Heart left ventricle (tissue), 16 donors: ENCODE measurements at regions of chr2 and their contacts with region 1.

Region 1: DNA sequence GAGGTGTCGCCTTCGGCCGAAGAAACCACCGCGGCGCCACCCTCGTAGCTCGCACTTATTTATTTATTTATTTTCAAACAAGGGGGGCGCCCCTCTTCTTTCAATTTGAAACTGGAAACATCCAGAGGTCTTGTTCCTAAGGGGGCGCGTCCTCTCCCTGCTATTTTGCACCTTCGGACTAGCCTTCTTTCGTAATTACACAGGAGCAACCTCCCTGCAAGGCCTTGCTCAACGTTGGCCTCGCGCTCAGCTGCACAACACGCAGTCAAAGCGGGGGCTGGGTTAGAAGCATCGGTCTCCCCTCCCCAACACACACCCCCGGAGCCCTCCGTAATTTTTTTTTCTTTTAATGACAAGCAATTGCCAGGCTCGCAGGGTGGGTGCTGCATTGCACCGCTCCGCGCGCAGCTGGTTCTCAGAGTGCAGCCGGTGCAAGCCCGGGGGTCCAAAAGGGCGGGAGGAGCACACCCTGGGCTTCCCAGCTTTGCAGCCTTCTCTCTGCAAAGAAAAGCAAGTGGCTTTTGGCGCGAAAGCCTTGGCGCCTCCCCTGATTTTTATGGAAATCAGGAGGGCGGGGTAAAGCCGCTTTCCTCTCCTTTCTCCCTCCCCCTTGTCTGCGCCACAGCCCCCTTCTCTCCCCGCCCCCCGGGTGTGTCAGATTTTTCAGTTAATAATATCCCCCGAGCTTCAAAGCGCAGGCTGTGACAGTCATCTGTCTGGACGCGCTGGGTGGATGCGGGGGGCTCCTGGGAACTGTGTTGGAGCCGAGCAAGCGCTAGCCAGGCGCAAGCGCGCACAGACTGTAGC is at the start of gene MYCN:
- DNase-seq: peak in 3 of 5 donors; percentile 52 to 65 (median 55)
- ATAC-seq: peak; percentile 15 to 63 (median 32)
- H3K4me3 ChIP-seq: peak within 1 kb of the TSS; percentile 22 to 73 (median 58)
- H3K27ac ChIP-seq: peak within 1 kb of the TSS in 5 of 12 donors; percentile 5 to 39 (median 29)
- H3K4me1 ChIP-seq: peaks cover 0 to 50% (median 39%) of the 10 kb centered on the region in 12 donors
- H3K27me3 ChIP-seq: peaks cover 0 to 57% (median 23%) of the 10 kb centered on the region in 9 donors
- CTCF ChIP-seq: peak in 7 of 12 donors; percentile 5 to 90 (median 80)
- POLR2A ChIP-seq: no peak
- total RNA-seq, gene MYCN: 0.37 to 1.6 (median 1.0) TPM in 7 of 9 donors, not detected in the others

Region 2: GRCh38 chr2:15645720-15646385 is 294.2 kb before region 1 on chr2:
- intact Hi-C with region 1: loop called in 2 of 10 experiments (anchors 2 to 5 kb)
- DNase-seq: no peak
- ATAC-seq: peak in 2 of 4 donors; percentile 22 to 29
- H3K4me3 ChIP-seq: no peak overlapping the region
- H3K27ac ChIP-seq: no peak overlapping the region
- H3K4me1 ChIP-seq: peaks cover 0 to 3% (median 0%) of the 10 kb centered on the region in 12 donors
- H3K27me3 ChIP-seq: no peaks in the 10 kb centered on the region
- CTCF ChIP-seq: no peak
- POLR2A ChIP-seq: no peak

Region 3: GRCh38 chr2:15748736-15749323 is 191.2 kb before region 1 on chr2:
- intact Hi-C with region 1: no loop called
- DNase-seq: no peak
- ATAC-seq: no peak
- H3K4me3 ChIP-seq: no peak overlapping the region
- H3K27ac ChIP-seq: peak overlapping the region in 1 of 12 donors; percentile 40
- H3K4me1 ChIP-seq: peaks cover 0 to 41% (median 20%) of the 10 kb centered on the region in 12 donors
- H3K27me3 ChIP-seq: no peaks in the 10 kb centered on the region
- CTCF ChIP-seq: peak in 10 of 12 donors; percentile 17 to 39 (median 26)
- POLR2A ChIP-seq: no peak

Region 4: GRCh38 chr2:15984368-15985255 is 44.6 kb after region 1 on chr2:
- intact Hi-C with region 1: no loop called
- DNase-seq: peak in 1 of 5 donors; percentile 32
- ATAC-seq: peak; percentile 46 to 71 (median 56)
- H3K4me3 ChIP-seq: no peak overlapping the region
- H3K27ac ChIP-seq: no peak overlapping the region
- H3K4me1 ChIP-seq: no peaks in the 10 kb centered on the region
- H3K27me3 ChIP-seq: peaks cover 0 to 7% (median 0%) of the 10 kb centered on the region in 9 donors
- CTCF ChIP-seq: no peak
- POLR2A ChIP-seq: no peak

Region 5: DNA sequence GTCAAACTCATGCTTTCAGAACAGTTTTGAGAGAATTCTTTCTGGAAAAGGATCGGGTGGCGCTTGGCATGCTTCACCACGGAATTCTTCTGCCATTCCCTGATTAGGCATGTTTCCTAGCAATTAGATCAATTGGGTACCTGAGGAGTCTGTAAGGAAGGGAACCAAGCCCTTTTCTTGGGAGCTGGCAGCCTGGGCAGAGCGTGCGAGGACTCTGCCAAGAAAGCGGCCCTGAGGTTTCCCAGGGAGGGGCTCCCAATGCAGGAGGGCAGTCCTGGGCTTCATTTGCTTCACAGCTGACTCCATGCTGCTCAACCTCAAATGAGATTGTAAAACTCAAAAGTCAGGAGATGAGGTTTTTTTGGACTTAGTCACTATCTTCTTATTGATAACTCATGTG is 60.6 kb after region 1 on chr2:
- intact Hi-C with region 1: no loop called
- DNase-seq: no peak
- ATAC-seq: no peak
- H3K4me3 ChIP-seq: no peak overlapping the region
- H3K27ac ChIP-seq: no peak overlapping the region
- H3K4me1 ChIP-seq: no peaks in the 10 kb centered on the region
- H3K27me3 ChIP-seq: peaks cover 0 to 9% (median 0%) of the 10 kb centered on the region in 9 donors
- CTCF ChIP-seq: no peak
- POLR2A ChIP-seq: no peak

Region 6: GRCh38 chr2:16218625-16219024 is 278.6 kb after region 1 on chr2:
- intact Hi-C with region 1: loop called in 7 of 10 experiments (anchors 5 to 10 kb)
- DNase-seq: no peak
- ATAC-seq: no peak
- H3K4me3 ChIP-seq: no peak overlapping the region
- H3K27ac ChIP-seq: no peak overlapping the region
- H3K4me1 ChIP-seq: peaks cover 0 to 8% (median 0%) of the 10 kb centered on the region in 12 donors
- H3K27me3 ChIP-seq: no peaks in the 10 kb centered on the region
- CTCF ChIP-seq: peak in 9 of 12 donors; percentile 10 to 48 (median 29)
- POLR2A ChIP-seq: no peak

Region 7: GRCh38 chr2:16281451-16282336 is 341.6 kb after region 1 on chr2:
- intact Hi-C with region 1: loop called in 9 of 10 experiments (anchors 1 to 5 kb)
- DNase-seq: peak in 1 of 5 donors; percentile 15
- ATAC-seq: peak; percentile 42 to 77 (median 69)
- H3K4me3 ChIP-seq: no peak overlapping the region
- H3K27ac ChIP-seq: no peak overlapping the region
- H3K4me1 ChIP-seq: no peaks in the 10 kb centered on the region
- H3K27me3 ChIP-seq: no peaks in the 10 kb centered on the region
- CTCF ChIP-seq: peak; percentile 2 to 70 (median 55)
- POLR2A ChIP-seq: no peak

Region 8: DNA sequence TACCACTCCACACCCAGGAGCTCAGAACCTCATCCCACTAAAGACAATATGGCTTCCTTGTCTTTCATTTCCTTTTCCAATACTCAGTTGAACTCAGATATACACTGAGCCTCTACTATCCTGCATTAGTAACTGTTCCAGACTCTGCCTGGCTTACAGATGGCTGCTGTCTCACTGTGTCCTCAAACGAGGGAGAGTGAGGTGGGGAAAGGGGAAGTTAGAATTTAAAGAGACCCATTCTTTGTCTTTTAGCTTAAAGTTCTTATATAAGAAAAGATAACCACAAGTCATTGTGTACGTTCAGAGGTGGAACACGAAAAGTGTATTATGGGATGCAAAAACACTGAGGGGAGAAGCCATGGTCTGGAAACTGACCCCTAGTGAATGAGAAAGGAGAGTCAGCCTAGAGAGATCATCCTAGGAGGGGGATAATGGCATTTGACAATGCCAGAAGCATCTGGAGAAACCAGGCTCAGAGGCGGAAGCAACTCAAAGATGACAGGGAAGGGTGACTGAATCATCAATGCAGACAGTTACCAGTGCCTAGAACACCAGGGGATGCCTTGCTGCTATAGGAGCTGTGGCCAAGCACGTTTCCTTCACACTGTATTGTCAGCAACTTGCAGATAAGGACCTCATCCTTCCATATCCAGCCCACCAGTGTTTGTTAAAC is 554.9 kb after region 1 on chr2:
- intact Hi-C with region 1: loop called in 2 of 10 experiments (anchors 5 kb)
- DNase-seq: no peak
- ATAC-seq: no peak
- H3K4me3 ChIP-seq: no peak overlapping the region
- H3K27ac ChIP-seq: no peak overlapping the region
- H3K4me1 ChIP-seq: no peaks in the 10 kb centered on the region
- H3K27me3 ChIP-seq: peaks cover 0 to 6% (median 0%) of the 10 kb centered on the region in 9 donors
- CTCF ChIP-seq: no peak
- POLR2A ChIP-seq: no peak

Region 9: DNA sequence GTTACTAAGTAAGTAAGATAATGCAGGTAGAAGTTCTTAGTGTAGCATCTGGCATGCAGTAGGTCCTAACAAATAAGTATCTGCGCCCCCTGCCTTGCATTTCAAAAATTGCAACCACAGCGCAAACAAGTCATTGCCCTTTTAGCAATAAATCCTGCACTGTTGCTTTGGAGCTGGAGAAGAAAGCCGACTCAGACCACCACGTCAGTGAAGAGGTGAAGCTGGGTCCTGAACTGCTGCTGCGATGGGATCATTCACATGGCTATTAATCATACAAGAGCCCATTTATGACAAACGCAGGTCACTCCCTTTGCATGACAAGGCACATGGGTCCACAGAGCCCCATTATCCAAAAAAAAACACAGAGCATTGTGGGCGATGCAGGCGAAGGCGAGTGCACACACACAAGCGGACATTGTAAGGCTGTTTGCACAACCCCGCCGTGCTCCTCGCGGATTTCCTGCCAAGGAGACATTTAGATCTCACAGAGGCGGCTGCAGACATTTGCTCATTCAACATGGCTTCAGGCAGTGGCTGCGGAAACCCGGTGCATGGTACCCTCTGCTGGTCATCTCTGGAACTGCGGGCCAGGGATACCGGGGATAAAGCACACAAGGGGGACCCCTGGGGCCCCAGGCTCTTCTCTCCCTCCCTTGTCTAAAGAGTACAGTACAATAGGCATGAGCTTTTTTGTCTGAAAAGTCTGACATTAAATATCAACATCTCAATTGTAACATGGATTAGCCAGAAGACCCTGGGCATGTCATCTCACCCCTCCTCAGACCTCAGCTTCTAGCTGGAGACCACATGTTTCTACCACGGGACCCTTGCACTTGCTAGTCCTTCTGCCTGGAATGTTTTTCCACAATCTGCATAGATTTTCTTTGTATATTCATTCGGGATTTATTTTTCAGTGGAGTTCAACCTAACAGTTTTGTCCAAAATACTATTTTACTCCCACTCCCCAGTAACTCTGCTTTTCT is 668.9 kb after region 1 on chr2:
- intact Hi-C with region 1: loop called in 9 of 10 experiments (anchors 2 to 10 kb)
- DNase-seq: peak; percentile 81 to 91 (median 85)
- ATAC-seq: peak; percentile 83 to 92 (median 88)
- H3K4me3 ChIP-seq: peak overlapping the region in 11 of 12 donors; percentile 10 to 56 (median 51)
- H3K27ac ChIP-seq: peak overlapping the region in 3 of 12 donors; percentile 32 to 77 (median 60)
- H3K4me1 ChIP-seq: peaks cover 0 to 36% (median 10%) of the 10 kb centered on the region in 12 donors
- H3K27me3 ChIP-seq: no peaks in the 10 kb centered on the region
- CTCF ChIP-seq: peak; percentile 84 to 96 (median 93)
- POLR2A ChIP-seq: no peak

Region 10: DNA sequence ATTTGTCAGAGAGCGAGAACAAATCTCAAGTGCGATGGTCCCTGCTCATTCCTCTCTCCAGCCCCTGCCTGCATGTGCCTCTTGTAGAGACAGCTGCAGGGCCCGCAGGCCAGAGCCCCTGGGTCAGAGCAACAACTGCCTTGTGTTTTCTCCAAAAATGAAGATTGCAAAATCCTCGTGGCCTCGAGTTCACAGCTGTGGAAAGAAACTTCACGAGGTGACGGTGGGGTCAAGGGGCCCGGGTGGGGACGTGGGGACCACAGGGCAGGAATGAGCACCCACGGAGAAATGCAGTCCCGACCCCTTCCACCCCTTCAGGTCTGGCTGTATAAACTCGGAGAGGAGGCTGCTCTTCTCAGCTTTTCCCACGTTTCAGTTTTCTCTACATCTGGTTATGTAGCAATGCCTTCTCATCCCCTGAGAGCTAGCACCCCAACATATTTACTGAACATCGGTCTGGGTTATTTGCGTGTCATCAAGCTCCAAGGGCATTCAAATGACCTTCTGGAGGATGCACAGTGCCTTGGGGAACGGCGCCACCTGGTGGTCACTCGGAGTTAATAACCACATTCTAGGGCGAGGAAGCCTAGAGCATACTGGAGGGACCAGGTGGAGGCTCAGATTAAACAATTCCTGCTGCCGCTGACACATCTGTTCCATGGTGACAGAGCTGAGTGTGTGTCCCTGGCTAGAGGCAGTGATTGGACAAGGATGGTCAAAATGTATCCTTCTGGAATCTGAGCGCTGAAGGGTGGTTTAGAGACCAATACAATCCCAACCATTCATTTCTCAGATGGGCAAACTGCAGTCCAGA is 817.0 kb after region 1 on chr2:
- intact Hi-C with region 1: loop called in 3 of 10 experiments (anchors 5 to 10 kb)
- DNase-seq: peak; percentile 71 to 87 (median 80)
- ATAC-seq: peak; percentile 81 to 93 (median 90)
- H3K4me3 ChIP-seq: no peak overlapping the region
- H3K27ac ChIP-seq: peak overlapping the region in 9 of 12 donors; percentile 12 to 60 (median 28)
- H3K4me1 ChIP-seq: peaks cover 0 to 22% (median 8%) of the 10 kb centered on the region in 12 donors
- H3K27me3 ChIP-seq: no peaks in the 10 kb centered on the region
- CTCF ChIP-seq: peak; percentile 84 to 95 (median 93)
- POLR2A ChIP-seq: no peak